ENCODE measurements at regions of chrX and their contacts with region 1.

Region 1: DNA sequence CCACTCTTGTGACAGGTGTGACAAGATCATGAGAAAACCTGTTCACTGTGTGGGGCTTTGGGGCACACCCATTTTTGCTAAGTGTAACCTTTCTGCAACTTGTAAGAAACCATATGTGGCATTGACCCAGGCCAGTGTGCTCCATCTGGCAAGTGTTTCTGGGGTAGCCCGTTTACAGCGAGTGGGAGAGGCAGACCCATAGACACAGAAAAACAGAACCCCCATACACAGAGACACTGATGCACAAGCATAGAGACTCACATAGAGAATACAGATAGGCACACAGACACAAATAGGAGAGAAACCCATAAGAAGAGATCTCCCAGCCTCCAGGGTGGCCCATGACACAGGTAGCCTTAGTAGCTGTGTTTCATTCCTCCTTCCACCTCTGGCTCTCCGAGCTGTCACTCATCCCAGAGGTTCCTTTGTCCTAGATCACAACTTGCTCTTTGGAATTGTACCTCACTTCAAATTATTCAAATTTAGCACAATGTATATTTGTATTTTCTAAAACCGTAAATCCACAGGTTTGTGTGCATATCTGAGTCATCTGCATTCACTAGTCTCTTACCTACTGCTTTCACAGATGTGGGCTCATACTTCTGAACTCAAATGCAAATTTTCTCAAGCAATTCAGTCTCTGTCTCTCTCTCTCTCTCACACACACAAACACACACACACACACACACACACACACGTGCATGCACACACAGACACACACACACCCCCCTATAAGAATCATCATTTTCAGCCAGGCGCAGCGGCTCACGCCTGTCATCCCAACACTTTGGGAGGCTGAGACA is 114.4 kb downstream of the SH3KBP1 start:
- DNase-seq: no peak
- H3K4me3 Mint-ChIP-seq: peak overlapping the region; percentile 72
- H3K27ac Mint-ChIP-seq: peak overlapping the region; percentile 93
- H3K4me1 Mint-ChIP-seq: peaks cover 46% of the 10 kb centered on the region
- H3K27me3 Mint-ChIP-seq: no peaks in the 10 kb centered on the region

Region 2: DNA sequence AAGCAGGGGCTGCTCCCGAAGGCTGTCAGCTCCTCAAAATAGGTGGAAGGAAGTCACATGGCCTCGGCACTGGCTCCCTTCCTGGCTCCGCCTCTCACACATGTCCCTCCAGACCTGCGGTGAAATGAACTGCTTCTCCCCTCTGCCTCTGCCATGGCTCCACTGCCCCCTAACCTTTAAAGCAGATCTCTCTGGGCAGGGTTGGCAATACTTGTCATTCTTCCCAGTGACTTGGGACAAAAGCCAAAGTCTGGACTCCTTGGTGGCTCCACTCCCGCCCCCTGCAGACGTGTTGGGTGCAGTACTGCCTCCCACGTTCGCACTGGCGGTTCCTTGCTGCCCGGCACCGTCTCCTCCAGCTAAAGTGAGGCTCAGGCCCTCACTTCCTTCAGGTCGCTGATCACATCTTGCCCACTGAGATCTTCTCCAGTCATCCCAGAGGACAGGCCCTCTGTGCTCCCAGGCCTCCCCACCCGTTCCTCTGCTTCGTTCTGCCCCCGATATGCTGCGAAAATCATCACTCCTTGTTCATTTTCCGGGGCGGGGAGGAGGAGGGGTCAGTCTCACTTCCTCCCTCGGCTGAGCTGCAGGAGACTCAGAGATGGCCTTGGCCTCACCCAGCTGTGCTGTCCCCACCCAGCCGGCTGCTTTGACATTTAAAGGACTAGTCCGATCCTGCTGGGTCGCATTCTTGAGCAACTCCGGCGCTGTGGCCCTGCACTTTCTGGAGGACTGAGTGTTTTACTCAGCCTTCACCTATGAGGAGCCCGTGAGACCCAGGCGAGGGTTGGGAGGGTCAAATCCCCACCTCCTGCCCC is 886.5 kb before region 1 on chrX:
- intact Hi-C with region 1: no loop called
- DNase-seq: peak; percentile 78
- H3K4me3 Mint-ChIP-seq: peak overlapping the region; percentile 85
- H3K27ac Mint-ChIP-seq: peak overlapping the region; percentile 91
- H3K4me1 Mint-ChIP-seq: peaks cover 19% of the 10 kb centered on the region
- H3K27me3 Mint-ChIP-seq: no peaks in the 10 kb centered on the region

Region 3: DNA sequence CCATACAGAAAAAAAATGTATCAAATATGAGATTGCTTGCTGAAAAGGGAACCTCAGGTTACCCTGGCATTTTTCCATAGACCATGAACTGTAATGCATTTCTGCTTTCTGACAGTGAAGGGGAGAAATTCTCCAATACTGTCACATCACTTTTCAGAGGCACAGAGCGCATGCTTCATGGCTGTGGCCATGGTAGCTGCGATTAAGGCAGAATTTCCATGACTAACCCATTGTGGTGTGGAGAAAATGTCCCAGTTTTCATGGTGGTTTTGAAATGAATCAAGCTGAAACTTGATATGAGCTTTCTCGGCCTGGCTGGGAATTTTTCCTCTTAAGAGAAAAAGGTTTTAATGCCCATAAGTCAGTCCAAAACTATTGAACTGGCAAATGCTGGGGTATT is 218.2 kb before region 1 on chrX:
- intact Hi-C with region 1: loop called (anchors 10 kb)
- DNase-seq: peak; percentile 64
- H3K4me3 Mint-ChIP-seq: peak overlapping the region; percentile 53
- H3K27ac Mint-ChIP-seq: peak overlapping the region; percentile 90
- H3K4me1 Mint-ChIP-seq: peaks cover 35% of the 10 kb centered on the region
- H3K27me3 Mint-ChIP-seq: no peaks in the 10 kb centered on the region

Region 4: DNA sequence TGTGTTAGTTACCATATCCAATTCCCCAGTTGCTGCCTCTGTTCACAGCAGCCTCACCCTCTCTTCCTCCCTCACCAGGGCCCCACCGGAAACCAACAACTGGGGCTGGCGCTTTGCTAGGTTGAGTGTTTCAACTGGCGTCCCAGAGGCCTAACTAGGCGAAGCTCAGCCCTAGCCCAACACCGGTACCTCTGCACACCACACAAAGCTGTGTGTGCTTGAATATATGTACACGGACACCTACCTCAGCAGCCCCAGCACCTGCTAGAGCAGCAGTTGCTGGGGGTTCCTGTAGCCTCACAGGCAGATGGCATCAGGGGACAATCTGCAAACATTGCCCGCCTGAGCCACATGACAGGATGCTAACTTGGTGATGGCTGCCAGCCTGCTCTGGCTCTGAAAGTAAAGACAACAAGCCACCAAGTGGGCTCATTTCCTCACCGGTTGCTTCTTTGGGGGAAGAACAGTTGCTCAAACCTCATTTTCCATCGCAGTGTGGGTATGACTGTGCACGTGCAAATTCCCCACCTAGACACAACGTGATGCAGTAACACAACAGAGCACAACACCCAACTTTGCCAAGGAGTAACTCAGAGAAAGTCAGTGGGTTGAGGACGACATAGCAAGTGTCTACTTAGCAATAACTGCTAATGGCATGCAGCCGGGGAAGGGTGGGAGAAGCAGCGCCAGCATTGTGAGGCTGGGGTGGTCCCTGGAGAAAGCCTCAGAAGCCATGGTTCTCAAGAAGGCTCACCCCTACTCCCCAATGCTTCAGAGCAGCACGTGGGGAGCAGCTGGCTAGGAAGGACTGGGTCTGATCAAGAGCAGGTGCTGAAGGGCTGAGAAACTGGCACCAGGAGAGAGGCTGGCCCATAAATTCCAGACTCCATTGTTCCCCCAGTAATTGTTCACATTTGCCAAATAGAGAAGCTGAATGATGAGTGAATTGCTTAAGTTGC is 25.1 kb before region 1 on chrX:
- intact Hi-C with region 1: loop called (anchors 1 kb)
- DNase-seq: peak; percentile 92
- H3K4me3 Mint-ChIP-seq: peak overlapping the region; percentile 68
- H3K27ac Mint-ChIP-seq: peak overlapping the region; percentile 97
- H3K4me1 Mint-ChIP-seq: peaks cover 72% of the 10 kb centered on the region
- H3K27me3 Mint-ChIP-seq: no peaks in the 10 kb centered on the region

Region 5: GRCh38 chrX:19785647-19786046 is 12.6 kb after region 1 on chrX:
- intact Hi-C with region 1: loop called (anchors 1 kb)
- DNase-seq: no peak
- H3K4me3 Mint-ChIP-seq: no peak overlapping the region
- H3K27ac Mint-ChIP-seq: peak overlapping the region; percentile 79
- H3K4me1 Mint-ChIP-seq: peaks cover 20% of the 10 kb centered on the region
- H3K27me3 Mint-ChIP-seq: no peaks in the 10 kb centered on the region

Region 6: DNA sequence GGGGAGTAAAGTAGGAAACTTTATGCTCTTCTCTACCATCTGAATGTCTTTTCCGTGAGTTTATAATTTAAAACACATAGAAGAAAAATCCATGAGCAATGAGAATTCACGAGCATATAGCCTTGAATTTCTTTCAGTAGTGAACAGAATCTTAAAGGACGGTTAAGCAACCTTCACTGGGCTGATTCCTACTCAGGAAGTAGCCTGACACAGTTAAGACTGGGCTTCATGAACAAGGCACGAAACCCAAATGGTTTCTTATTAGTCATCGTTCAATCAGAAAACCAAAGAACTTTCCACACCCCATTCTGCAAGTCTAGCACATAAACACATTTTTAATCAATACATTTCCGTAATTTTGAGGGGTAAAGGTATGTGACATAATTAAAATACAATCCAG is 18.5 kb after region 1 on chrX:
- intact Hi-C with region 1: loop called (anchors 2 kb)
- DNase-seq: peak; percentile 68
- H3K4me3 Mint-ChIP-seq: peak overlapping the region; percentile 62
- H3K27ac Mint-ChIP-seq: peak overlapping the region; percentile 88
- H3K4me1 Mint-ChIP-seq: peaks cover 36% of the 10 kb centered on the region
- H3K27me3 Mint-ChIP-seq: no peaks in the 10 kb centered on the region

Region 7: DNA sequence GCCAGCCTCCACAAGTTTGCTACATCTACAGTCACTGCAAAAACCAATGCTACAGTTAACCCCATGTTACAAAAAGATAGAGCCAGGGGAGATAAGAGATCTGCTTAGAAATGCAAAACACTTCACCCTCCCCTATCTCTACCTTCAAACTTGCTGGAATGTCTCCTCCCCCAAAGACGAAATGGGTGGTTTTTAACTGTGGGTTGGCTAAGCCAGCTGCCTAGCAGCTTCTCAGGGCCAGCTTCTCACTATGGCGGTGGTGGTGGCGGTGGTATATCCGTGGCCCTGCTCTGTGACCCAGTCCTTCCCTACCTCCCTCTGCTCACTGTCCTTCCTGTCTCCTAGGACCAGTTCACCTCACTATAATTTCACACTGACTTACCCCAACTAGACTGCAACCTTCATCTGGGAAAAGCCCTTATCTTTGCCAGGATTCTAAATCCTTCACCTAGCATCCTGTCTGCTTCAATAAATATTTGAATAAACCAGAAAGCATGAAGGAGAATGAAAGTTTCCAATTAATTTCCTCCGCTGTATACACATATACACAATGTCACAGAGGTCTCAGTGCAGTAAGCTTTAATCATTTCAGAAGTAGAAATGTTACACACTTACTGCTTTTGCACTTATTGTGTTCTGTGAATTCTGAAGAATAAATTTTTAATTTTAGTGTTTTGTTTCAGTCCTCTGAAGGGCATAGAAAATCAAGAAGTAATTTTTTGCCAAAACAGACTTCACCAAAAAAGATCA is 68.0 kb after region 1 on chrX:
- intact Hi-C with region 1: loop called (anchors 2 kb)
- DNase-seq: peak; percentile 85
- H3K4me3 Mint-ChIP-seq: peak overlapping the region; percentile 75
- H3K27ac Mint-ChIP-seq: peak overlapping the region; percentile 95
- H3K4me1 Mint-ChIP-seq: peaks cover 42% of the 10 kb centered on the region
- H3K27me3 Mint-ChIP-seq: no peaks in the 10 kb centered on the region

Measured in activated CD4-positive, alpha-beta T cell treated with anti-CD3 and anti-CD28 coated beads, Interleukin-2, amount 10 ng/mL, durations not matched to agents 24 days and 14 days (primary cell).